ENCODE measurements at regions of chr9 and their contacts with region 1.

Region 1: GRCh38 chr9:98929866-98930265 is 13.8 kb upstream of the COL15A1 start:
- DNase-seq: no peak
- H3K4me3 ChIP-seq: no peak overlapping the region
- H3K27ac ChIP-seq: no peak overlapping the region
- H3K4me1 ChIP-seq: no peaks in the 10 kb centered on the region
- H3K27me3 ChIP-seq: no peaks in the 10 kb centered on the region
- CTCF ChIP-seq: no peak

Region 2: DNA sequence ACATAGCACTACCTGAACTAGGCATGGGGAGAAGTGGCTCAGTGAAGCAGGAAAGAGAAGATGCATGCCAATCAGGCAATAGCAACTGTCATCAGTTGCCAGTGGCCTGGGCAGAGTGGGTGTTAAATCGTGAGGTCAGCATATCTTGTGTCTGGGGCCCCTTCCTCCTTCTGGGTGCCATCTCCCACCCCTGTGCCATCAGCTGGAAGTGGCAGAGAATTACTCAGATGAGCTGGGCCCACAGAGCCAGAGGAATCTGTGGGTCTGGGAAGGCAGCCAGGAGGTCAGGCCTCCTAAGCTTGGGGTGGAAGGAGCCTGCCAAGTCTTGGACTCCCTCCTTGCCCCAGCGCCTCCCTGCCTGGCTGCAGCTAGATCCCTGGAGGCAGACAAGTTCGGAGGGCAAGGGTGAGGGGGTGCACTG is 55.9 kb before region 1 on chr9:
- intact Hi-C with region 1: loop called (anchors 10 kb)
- DNase-seq: peak; percentile 67 to 84
- H3K4me3 ChIP-seq: no peak overlapping the region
- H3K27ac ChIP-seq: no peak overlapping the region
- H3K4me1 ChIP-seq: peaks cover 0 to 26% (median 24%) of the 10 kb centered on the region in 4 donors
- H3K27me3 ChIP-seq: no peaks in the 10 kb centered on the region
- CTCF ChIP-seq: no peak

Region 3: GRCh38 chr9:98906262-98907040 is 23.4 kb before region 1 on chr9:
- intact Hi-C with region 1: no loop called
- DNase-seq: peak in 1 of 2 donors; percentile 70
- H3K4me3 ChIP-seq: no peak overlapping the region
- H3K27ac ChIP-seq: peak overlapping the region; percentile 29 to 45
- H3K4me1 ChIP-seq: peaks cover 0 to 32% (median 21%) of the 10 kb centered on the region in 4 donors
- H3K27me3 ChIP-seq: no peaks in the 10 kb centered on the region
- CTCF ChIP-seq: no peak

Measured in tibial artery (tissue), 4 donors.